ENCODE measurements at regions of chr1 and their contacts with region 1.

Region 1: DNA sequence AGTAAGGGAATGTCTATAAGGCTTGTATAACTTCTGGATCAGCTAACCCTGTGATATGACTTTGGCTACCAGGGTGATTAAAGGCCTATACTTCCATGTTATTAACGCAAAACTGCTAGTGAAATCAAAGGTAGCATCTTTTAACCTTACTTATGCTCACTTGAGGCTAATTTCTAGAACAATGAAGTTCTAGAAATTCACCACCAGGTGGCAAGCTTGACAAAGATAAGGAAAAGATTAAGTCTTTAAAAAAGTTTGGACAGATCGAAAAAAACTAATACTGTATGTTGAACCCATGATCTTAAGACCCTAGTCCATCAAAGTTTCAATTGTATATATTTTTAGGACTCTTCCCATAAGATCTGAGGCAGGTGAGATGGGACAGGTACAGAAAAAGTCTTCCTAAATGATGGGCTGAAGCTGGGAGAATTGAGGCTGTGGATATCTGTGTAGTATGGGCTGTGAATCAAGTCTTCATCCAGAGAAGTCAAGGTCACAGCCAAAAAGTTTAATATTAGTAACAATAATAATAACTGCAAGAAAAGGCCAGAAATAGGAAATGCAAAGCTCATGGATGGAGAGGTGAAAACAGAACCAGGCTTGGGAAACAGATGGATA is 18.8 kb downstream of the KYAT3 start:
- DNase-seq: no peak
- H3K4me3 ChIP-seq: no peak overlapping the region
- CTCF ChIP-seq: no peak
- POLR2A ChIP-seq: no peak

Region 2: DNA sequence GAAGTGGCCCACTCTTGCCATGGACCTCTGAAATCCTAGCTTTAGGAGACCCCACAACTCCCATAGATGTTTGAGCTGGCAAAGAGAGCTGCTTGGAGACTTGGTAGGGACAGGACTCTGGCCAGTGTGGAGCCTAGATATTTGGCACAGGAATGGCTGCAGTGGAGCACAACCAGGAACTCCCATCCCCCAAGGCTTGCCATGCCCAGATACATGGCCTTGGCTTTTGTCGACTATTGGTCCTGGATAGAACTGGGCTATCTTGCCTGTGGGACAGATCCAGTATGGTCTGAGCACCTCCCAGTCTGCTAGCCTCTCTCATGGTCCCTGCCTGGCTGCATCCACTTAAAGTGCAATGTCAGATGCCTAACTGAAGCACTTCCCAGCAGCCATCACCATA is 160.1 kb after region 1 on chr1:
- intact Hi-C with region 1: no loop called
- DNase-seq: no peak
- H3K4me3 ChIP-seq: no peak overlapping the region
- CTCF ChIP-seq: no peak
- POLR2A ChIP-seq: no peak

Region 3: DNA sequence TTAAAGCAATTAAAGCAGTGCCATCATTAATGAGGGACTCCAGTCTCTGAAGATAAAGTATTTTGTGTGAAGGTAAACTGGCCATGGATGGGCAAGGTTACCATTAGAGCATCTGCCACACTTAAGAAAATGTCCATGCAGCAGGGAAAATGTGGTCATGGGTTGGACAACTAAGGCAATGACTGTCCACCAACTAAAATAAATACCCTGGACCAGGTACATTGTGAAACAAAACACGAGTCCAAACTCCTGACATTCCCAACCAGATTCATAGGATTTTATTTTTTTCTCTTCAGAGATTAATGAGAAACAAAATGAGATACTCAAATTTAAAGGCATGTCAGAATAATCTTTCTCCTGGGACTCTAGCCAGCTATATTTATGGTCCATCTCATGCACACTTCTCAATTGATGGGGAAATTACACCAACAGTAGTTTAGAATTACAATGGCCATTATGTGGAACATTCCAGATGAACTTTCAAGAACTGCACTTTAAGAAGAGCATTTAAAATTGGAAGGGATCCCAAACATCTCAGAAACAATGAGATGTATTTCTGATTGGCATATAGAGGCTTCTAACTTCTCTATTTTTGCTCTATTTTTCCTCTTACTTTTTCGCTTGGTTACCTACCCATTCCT is 194.1 kb after region 1 on chr1:
- intact Hi-C with region 1: no loop called
- DNase-seq: no peak
- H3K4me3 ChIP-seq: no peak overlapping the region
- CTCF ChIP-seq: no peak
- POLR2A ChIP-seq: no peak

Region 4: GRCh38 chr1:89221341-89221740 is 247.7 kb after region 1 on chr1:
- intact Hi-C with region 1: no loop called
- DNase-seq: no peak
- H3K4me3 ChIP-seq: no peak overlapping the region
- CTCF ChIP-seq: no peak
- POLR2A ChIP-seq: no peak

Region 5: GRCh38 chr1:89454845-89455521 is 481.4 kb after region 1 on chr1:
- intact Hi-C with region 1: loop called (anchors 10 kb)
- DNase-seq: peak in 1 of 2 donors; percentile 56
- H3K4me3 ChIP-seq: no peak overlapping the region
- CTCF ChIP-seq: no peak
- POLR2A ChIP-seq: no peak

Measured in lower leg skin (tissue), 4 donors.